ENCODE measurements at regions of chr17 and their contacts with region 1.

Region 1: GRCh38 chr17:2892305-2892971 is 96.2 kb downstream of the RAP1GAP2 start:
- DNase-seq: peak; percentile 85
- ATAC-seq: peak; percentile 65
- H3K4me3 ChIP-seq: peak overlapping the region in 1 of 2 experiments; percentile 44; a peak in 2 of 4 replicates
- H3K27ac ChIP-seq: peak overlapping the region; percentile 24; the same call in 1 of the 2 replicates
- H3K4me1 ChIP-seq: peaks cover 47 to 61% of the 10 kb centered on the region in 2 experiments
- H3K27me3 ChIP-seq: no peaks in the 10 kb centered on the region
- CTCF ChIP-seq: no peak
- POLR2A ChIP-seq: no peak
- RAD21 ChIP-seq: no peak

Region 2: GRCh38 chr17:2656283-2656682 is 236.2 kb before region 1 on chr17:
- CTCF ChIA-PET with region 1: no interaction called
- POLR2A ChIA-PET with region 1: no interaction called
- RAD21 ChIA-PET with region 1: no interaction called
- intact Hi-C with region 1: no loop called
- DNase-seq: no peak
- ATAC-seq: no peak
- H3K4me3 ChIP-seq: no peak overlapping the region
- H3K27ac ChIP-seq: no peak overlapping the region
- H3K4me1 ChIP-seq: peaks cover 17 to 21% of the 10 kb centered on the region in 2 experiments
- H3K27me3 ChIP-seq: no peaks in the 10 kb centered on the region
- CTCF ChIP-seq: no peak
- POLR2A ChIP-seq: no peak
- RAD21 ChIP-seq: no peak

Region 3: GRCh38 chr17:2853722-2854518 is 38.5 kb before region 1 on chr17:
- CTCF ChIA-PET with region 1: interaction called, 9 read pairs
- POLR2A ChIA-PET with region 1: no interaction called
- RAD21 ChIA-PET with region 1: no interaction called
- intact Hi-C with region 1: loop called (anchors 2 kb)
- DNase-seq: no peak
- ATAC-seq: peak; percentile 60
- H3K4me3 ChIP-seq: peak overlapping the region; percentile 69 to 85
- H3K27ac ChIP-seq: peak overlapping the region; percentile 49; the same call in 1 of the 2 replicates
- H3K4me1 ChIP-seq: peaks cover 9 to 16% of the 10 kb centered on the region in 2 experiments
- H3K27me3 ChIP-seq: no peaks in the 10 kb centered on the region
- CTCF ChIP-seq: no peak
- POLR2A ChIP-seq: no peak
- RAD21 ChIP-seq: no peak

Region 4: GRCh38 chr17:2975469-2975958 is 83.1 kb after region 1 on chr17:
- CTCF ChIA-PET with region 1: no interaction called
- POLR2A ChIA-PET with region 1: no interaction called
- RAD21 ChIA-PET with region 1: no interaction called
- intact Hi-C with region 1: loop called (anchors 5 kb)
- DNase-seq: peak; percentile 90
- ATAC-seq: peak; percentile 96
- H3K4me3 ChIP-seq: peak overlapping the region; percentile 55 to 96
- H3K27ac ChIP-seq: peak overlapping the region; percentile 70
- H3K4me1 ChIP-seq: peaks cover 4 to 15% of the 10 kb centered on the region in 2 experiments
- H3K27me3 ChIP-seq: no peaks in the 10 kb centered on the region
- CTCF ChIP-seq: no peak
- POLR2A ChIP-seq: peak; percentile 92
- RAD21 ChIP-seq: peak; percentile 37; the same call in 1 of the 2 replicates

Measured in HCT116 (cell line).